HEK293 (cell line): ENCODE measurements at regions of chr11 and their contacts with region 1.

Region 1: DNA sequence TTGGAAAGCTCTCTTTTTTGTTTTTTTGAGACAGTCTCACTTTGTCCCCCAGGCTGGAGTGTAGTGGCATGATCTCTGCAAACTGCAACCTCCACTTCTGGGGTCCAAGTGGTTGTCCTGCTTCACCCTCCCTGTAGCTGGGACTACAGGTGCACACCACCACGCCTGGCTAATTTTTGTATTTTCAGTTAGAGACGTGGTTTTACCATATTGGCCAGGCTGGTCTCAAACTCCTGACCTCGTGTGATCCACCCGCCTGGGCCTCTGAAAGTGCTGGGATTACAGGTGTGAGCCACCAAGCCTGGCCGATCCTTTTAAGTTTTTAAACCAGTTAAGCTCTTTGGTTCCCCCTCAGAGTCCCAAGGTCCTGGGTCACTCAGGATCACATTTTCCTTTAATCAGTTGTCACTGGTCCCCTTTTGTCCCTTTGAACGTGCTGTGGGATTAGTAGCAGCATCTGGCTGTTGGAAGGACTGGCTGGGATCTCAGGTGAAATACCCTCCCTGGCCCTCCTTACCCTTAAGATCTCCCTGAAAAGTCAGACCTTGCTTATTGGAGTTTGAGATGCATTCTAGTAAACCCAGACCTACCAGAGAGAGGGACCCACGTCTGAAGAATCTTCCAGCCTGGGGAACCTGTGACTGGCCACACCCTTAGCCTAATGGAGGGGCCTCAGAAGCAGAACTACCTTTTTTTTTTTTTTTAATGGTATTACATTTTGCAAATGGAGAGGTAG is 8.1 kb downstream of the MALAT1 start:
- H3K4me3 ChIP-seq: peak overlapping the region; percentile 27
- H3K27ac ChIP-seq: peak overlapping the region; percentile 24; the same call in 1 of the 2 replicates
- H3K4me1 ChIP-seq: no peaks in the 10 kb centered on the region
- CTCF ChIP-seq: no peak

Region 2: GRCh38 chr11:65321828-65322485 is 185.0 kb before region 1 on chr11:
- CTCF ChIA-PET with region 1: interaction called, 3 read pairs
- POLR2A ChIA-PET with region 1: interaction called, 11 read pairs
- H3K4me3 ChIP-seq: no peak overlapping the region
- H3K27ac ChIP-seq: no peak overlapping the region
- H3K4me1 ChIP-seq: no peaks in the 10 kb centered on the region
- CTCF ChIP-seq: no peak

Region 3: DNA sequence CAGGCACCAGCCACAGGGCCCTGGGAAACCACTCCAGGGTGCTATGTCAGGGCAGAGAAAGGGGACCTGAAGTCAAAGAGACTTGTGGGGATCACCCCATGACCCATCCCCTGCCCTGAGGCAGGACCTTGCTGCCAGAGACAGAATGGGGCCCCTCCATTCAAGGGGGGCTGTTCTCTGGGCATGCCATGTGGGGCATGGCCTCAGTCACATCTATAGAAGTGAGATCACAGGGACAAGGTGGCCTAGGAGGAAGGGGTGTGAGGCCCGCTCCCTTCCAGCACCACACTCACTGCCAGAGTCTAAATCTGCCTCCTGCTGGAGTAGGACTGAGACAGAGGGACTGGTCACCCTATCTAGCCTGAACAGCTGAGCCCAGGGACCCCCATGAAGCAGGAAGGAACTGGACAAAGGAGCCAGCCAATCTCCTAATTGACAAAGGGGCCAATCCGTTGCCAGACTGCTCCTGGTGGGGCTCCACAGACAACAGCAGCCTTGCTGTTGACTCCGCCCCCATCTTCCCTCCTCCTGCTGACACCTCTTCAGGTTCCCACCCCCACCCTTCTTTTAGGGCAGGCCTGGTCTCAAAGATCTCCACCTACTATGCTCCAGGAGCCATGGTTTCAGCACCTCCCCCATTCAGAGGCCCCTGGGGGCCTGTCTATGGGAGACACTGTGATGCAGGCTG is 58.4 kb before region 1 on chr11:
- CTCF ChIA-PET with region 1: interaction called, 3 read pairs
- POLR2A ChIA-PET with region 1: interaction called, 34 read pairs
- H3K4me3 ChIP-seq: no peak overlapping the region
- H3K27ac ChIP-seq: no peak overlapping the region
- H3K4me1 ChIP-seq: no peaks in the 10 kb centered on the region
- CTCF ChIP-seq: no peak

Region 4: DNA sequence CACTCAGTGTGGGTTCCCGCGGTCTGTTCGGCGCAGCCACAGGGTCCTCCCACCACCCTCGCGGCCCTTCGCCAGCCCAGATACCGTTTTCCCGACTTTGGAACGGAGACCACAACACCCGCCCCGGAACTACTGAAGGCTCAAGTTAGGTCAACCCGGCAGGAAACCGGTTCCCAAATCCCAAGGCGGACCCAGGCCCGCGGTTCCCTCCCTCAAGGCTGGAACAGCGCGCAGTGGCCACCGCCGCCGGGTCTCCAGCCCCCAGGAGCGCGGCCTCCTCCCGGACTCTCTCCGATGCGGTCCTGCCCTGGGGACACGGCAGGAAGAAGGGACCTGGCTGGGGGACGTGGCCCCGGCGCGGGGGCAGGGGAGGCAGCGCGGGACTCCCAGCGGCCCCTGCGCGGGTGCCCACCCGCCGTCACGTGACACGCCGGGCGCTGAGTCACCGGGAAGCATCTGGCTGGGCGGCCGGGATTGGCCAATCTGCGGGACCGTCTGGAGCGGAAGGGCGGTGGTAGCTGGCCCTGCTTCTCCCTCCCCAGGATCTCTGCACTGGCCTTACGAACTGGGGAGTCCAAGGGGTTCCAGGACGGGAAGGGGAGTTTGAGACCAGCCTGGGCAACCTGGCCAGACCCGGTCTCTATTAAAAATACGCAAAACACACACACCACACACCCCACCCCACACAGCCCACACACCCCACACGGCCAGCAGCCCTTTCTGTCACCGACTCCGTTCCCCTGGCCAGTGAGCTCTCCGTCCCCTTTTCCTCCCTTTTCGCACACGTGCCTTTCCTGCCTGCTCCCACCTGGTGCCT is 29.6 kb before region 1 on chr11:
- CTCF ChIA-PET with region 1: interaction called, 69 read pairs
- POLR2A ChIA-PET with region 1: interaction called, 560 read pairs
- H3K4me3 ChIP-seq: peak overlapping the region; percentile 98
- H3K27ac ChIP-seq: peak overlapping the region; percentile 93
- H3K4me1 ChIP-seq: no peaks in the 10 kb centered on the region
- CTCF ChIP-seq: 0 out of 2 replicates have a peak, but pooled peaks have one; percentile 15